ENCODE measurements at regions of chr5 and their contacts with region 1.

Region 1: GRCh38 chr5:7754992-7755596 is 95.8 kb downstream of the CFAP90 start:
- DNase-seq: no peak
- ATAC-seq: no peak

Region 2: DNA sequence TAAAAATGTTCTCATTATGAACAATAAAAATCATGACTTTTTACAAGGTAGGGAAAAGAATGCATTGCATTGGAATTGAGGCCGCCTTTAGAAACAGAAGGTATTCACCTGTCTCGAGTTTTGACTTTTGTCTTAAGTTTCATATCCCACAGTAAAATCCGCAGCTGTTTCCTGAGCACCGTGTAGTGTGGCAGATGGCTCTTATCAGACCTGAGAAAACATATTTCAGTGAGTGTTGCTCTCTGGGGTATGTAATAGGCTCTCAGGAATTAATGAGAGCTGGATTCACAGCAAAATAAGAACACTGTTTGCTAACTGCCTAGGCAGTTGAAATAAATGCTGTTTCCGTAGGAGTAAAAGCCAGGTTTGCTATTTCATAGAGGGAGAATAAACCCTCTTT is 125.5 kb before region 1 on chr5:
- intact Hi-C with region 1: no loop called
- DNase-seq: no peak
- ATAC-seq: no peak

Region 3: DNA sequence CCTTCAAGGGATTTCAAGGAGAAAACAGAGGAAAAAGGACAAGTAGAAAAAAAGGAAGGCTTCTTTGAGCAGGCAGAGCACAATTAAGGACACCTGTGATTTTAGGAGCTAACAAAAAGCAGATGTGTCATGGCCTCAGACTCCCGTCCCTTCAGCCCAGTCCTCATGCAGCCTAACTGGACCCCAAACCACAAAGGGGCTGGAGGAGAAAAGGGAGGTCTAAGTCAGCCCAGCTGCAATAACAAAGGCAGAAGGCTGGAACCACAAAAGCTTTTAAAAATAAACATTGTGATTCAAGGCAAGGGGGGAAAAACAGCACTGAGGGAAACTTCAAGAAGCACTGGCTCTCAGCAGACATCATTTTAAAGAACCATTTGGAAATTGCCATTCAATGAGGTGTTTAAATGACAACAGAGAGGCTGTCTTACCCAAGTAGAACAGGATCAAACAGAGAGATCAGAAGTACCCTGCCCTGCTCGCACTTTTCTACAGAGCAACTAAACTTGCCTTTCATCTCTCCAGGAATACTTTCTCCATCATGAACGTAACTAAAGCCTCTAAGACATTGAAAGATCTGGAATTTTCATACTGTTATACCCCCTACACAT is 1701.4 kb after region 1 on chr5:
- intact Hi-C with region 1: loop called (anchors 10 kb)
- DNase-seq: no peak
- ATAC-seq: no peak